Right cardiac atrium (tissue), 5 donors: ENCODE measurements at regions of chrX and their contacts with region 1.

Region 1: DNA sequence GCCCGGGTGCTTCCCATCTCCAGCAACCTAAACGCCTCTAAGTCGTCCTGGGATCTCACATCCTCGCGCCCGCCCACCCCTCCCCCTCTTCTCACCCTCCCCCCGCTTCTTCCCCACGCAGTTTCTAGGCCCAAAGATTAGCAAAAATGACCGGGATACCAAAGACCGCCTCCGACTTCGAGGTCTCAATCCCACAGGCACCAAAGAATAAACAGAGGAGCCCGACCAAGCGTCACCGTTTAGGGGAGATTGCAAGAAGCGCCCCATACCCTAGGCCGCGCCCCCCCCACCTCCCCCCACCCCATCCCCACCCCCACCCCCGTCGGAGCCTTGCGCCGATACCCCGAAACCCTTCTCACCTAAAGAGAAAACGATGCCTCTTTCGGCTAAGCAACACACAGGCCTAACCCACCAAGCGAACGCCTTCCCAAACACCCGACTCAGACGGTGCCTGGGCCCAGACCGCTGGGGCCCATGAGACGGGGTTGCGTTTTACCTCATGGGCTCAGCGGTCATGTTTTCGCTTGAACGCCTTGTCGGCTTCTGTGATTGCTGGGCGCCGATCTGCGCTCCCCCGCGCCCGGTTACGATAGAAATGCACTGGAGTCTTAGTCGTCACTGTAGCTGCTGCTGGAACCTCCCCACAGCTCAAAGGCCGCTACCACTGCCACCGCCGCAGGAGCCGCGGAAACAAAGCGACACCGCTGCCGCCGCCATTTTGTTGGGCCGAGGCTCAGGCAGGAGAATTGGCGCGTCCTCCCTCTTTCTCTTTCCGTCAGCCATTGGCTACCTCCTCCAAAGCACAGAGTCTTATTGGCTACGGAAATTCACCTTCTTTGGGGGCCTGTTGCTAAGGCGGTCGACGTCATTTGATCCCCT is at the start of gene ATRX:
- DNase-seq: peak; percentile 69 to 85 (median 83)
- ATAC-seq: peak; percentile 97
- H3K4me3 ChIP-seq: peak within 1 kb of the TSS; percentile 97
- H3K27ac ChIP-seq: peak within 1 kb of the TSS; percentile 100
- H3K4me1 ChIP-seq: peaks cover 1% of the 10 kb centered on the region
- H3K27me3 ChIP-seq: no peaks in the 10 kb centered on the region
- total RNA-seq, gene ATRX: 76.7 to 92.0 (median 84.5) TPM

Region 2: DNA sequence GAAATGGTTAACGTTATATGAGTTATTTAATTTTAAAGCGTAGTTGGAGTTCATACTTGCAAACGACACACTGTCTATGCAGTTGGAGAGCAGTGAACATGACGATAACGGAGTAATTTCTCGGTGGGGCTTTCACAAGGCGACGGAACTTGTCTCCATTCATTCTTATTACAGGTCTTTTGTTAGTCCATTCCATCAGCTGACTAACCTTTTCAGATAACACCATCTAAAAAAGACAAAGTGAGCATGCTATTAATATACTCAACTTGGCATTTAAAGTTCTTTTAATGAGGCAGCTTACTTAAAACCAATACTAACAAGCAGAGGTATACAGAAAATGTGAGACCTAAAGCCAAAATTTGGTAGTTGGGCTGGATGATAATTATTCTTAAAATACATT is 89.6 kb after region 1 on chrX:
- intact Hi-C with region 1: loop called in 1 of 4 experiments (anchors 10 kb)
- DNase-seq: no peak
- ATAC-seq: no peak
- H3K4me3 ChIP-seq: no peak overlapping the region
- H3K27ac ChIP-seq: no peak overlapping the region
- H3K4me1 ChIP-seq: no peaks in the 10 kb centered on the region
- H3K27me3 ChIP-seq: no peaks in the 10 kb centered on the region

Region 3: GRCh38 chrX:77899081-77899828 is 113.5 kb after region 1 on chrX and contains the start of gene COX7B:
- intact Hi-C with region 1: loop called in 1 of 4 experiments (anchors 10 kb)
- DNase-seq: peak in 2 of 3 donors; percentile 41 to 59
- ATAC-seq: peak; percentile 85 to 88
- H3K4me3 ChIP-seq: peak within 1 kb of the TSS; percentile 98
- H3K27ac ChIP-seq: peak within 1 kb of the TSS; percentile 95
- H3K4me1 ChIP-seq: no peaks in the 10 kb centered on the region
- H3K27me3 ChIP-seq: no peaks in the 10 kb centered on the region
- total RNA-seq, gene COX7B: 1,046 to 1,477 (median 1,227) TPM